Dendritic cell treated with granulocyte-macrophage colony-stimulating factor and Interleukin-4, amounts not matched to agents 40 ng/mL and 50 ng/mL, for 4 days (primary cell): ENCODE measurements at regions of chr2 and their contacts with region 1.

Region 1: GRCh38 chr2:174341286-174341994 is 6.7 kb downstream of the SP9 start:
- H3K4me3 Mint-ChIP-seq: peak overlapping the region; percentile 67
- H3K27ac Mint-ChIP-seq: no peak overlapping the region
- H3K4me1 Mint-ChIP-seq: peaks cover 46% of the 10 kb centered on the region
- H3K27me3 Mint-ChIP-seq: peaks cover 83% of the 10 kb centered on the region

Region 2: DNA sequence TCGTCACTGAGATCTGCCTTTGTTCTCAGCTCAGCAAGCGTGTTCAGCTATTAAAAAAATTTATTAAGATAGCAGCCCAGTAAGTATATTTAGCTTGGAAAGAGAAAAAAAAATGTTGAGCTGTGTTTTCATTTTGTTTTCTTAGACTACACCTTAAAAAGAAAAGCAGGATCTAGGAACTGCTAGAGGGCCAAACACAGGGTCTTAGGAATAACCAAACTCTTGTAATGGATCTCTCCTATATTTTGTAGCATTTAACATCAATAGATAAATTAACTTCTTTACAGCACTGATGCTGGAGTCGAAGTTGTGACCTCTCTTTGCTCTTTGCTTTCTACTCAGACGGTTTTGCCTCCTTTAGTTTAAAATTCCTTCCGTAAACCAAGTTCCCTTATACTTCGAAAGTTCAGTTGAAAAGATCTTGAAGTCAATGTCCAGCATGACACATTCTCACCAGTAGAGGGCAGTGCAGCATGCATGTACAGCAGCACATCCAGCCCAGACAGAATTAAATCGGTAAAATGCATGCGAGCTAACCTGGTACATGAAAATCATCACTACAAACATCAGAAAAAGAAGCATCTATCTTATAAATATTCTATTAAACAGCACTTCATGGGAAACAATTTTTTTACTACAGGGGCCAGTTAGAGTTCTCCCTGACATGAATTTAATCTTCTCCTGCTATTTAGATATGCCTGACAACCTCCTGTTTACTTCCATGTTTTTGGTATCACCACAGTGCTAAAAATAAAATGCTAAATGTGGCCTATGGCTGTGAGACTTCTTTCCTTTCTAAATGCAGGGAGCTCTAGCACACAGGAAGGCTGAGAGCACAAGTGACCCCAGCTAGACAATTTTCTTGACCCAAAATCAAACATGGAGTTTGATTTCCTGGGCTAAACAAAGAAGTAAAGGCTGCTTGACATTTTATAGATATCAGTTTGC is 1314.0 kb before region 1 on chr2:
- intact Hi-C with region 1: loop called (anchors 10 kb)
- H3K4me3 Mint-ChIP-seq: no peak overlapping the region
- H3K27ac Mint-ChIP-seq: no peak overlapping the region
- H3K4me1 Mint-ChIP-seq: no peaks in the 10 kb centered on the region
- H3K27me3 Mint-ChIP-seq: peaks cover 5% of the 10 kb centered on the region

Region 3: GRCh38 chr2:173571021-173571882 is 770.2 kb before region 1 on chr2:
- intact Hi-C with region 1: loop called (anchors 10 kb)
- H3K4me3 Mint-ChIP-seq: no peak overlapping the region
- H3K27ac Mint-ChIP-seq: no peak overlapping the region
- H3K4me1 Mint-ChIP-seq: peaks cover 5% of the 10 kb centered on the region
- H3K27me3 Mint-ChIP-seq: peaks cover 15% of the 10 kb centered on the region

Region 4: GRCh38 chr2:173965329-173966025 is 376.0 kb before region 1 on chr2 and contains the start of gene SP3:
- intact Hi-C with region 1: loop called (anchors 10 kb)
- H3K4me3 Mint-ChIP-seq: peak within 1 kb of the TSS; percentile 96
- H3K27ac Mint-ChIP-seq: peak within 1 kb of the TSS; percentile 100
- H3K4me1 Mint-ChIP-seq: peaks cover 44% of the 10 kb centered on the region
- H3K27me3 Mint-ChIP-seq: no peaks in the 10 kb centered on the region

Region 5: GRCh38 chr2:174158003-174158402 is 183.4 kb before region 1 on chr2:
- intact Hi-C with region 1: loop called (anchors 1 kb)
- H3K4me3 Mint-ChIP-seq: no peak overlapping the region
- H3K27ac Mint-ChIP-seq: no peak overlapping the region
- H3K4me1 Mint-ChIP-seq: peaks cover 20% of the 10 kb centered on the region
- H3K27me3 Mint-ChIP-seq: no peaks in the 10 kb centered on the region